GM10248 (cell line): ENCODE measurements at regions of chr14 and their contacts with region 1.

Region 1: GRCh38 chr14:32469388-32470160 is 140.5 kb downstream of the AKAP6 start:
- DNase-seq: peak; percentile 22
- CTCF ChIP-seq: peak; percentile 56

Region 2: GRCh38 chr14:32259368-32260013 is 210.1 kb before region 1 on chr14:
- CTCF ChIA-PET with region 1: interaction called, 13 read pairs
- POLR2A ChIA-PET with region 1: no interaction called
- DNase-seq: peak; percentile 42
- CTCF ChIP-seq: no peak

Region 3: DNA sequence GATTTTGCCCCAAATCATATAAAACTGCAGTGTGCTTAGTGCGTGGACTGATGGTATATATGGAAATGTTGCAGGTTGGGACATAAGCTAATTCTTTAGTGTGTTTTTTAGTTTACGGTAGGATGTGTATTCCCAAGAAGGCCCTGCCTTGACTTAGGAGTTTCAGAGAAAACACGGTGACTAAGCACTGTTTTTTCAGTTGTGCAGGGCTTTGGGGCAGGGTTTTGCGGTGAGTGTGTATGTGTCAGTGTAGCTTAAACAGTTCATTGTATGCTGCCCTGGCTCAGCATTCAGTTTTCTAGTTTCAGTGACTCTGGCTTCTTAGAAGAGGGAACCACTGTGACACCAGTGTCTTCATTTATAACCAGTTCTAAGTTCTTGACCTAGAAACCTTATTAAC is 39.2 kb before region 1 on chr14:
- CTCF ChIA-PET with region 1: no interaction called
- POLR2A ChIA-PET with region 1: no interaction called
- DNase-seq: no peak
- CTCF ChIP-seq: no peak

Region 4: DNA sequence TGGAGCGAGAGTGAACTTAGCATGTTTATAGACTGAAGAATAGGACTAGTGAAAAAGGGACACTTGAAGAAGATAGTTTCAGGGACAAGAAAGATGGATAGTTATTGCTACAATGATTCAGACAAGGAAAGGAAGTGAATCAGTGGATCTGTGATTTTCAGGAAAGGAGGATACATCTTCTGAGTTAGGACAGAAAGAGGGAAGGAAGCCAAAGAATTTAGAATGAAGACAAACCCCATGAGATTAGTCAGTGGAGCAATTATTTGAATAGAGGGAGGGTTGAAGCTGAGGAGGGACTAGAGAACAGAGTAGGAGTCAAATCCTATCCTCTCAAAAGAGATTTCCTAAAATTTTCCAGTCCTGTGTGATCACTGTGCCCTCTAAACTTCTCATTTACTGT is 142.2 kb after region 1 on chr14:
- CTCF ChIA-PET with region 1: no interaction called
- POLR2A ChIA-PET with region 1: no interaction called
- DNase-seq: no peak
- CTCF ChIP-seq: no peak